Tibial artery (tissue), 4 donors: ENCODE measurements at regions of chr11 and their contacts with region 1.

Region 1: DNA sequence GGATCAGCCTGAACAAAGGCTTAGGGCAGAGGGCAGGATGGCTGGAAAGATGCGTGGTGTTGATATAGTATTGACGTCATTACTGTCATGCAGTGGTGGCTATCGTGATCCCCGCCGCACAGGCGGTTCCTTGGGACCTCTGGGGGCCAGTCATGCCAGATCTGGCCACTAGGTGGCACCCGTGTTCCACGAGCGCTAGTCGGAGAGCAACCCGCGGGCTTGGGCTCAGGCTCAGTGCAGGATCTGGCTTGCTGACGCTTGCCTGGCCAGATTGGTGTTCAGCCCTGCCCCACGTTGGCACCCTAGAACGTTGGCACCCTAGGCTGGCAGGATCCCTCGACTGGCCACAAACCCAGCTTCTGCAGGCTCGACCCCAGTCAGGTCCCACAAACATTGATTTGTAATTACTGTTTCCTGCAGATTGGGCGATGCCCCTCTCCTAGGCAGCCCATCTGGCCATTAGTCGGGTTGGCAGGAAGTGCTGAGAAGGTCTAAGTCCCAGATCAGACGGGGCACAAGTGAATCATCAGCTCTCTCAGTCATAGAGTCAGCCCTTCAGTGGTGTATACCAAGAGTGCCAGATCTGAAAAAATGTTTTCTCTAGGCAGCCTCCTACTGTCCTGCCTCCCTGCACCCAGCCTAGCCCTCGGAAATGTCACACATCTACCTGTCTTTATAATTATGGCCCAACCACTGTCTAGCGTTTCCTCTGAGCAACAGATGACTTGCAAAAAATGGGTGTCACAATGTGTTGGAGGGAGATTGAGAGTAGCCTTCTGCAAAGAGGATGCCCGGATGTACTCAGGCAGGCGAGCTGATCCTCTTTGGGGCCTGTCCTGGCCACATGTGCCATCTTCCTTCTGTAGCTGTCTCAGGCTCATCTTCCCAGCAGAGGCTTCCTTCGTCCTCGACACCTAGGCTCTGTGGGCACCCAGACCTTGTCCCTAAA is 315.3 kb downstream of the TMEM135 start:
- DNase-seq: peak; percentile 77 to 89
- H3K4me3 ChIP-seq: no peak overlapping the region
- H3K27ac ChIP-seq: peak overlapping the region; percentile 16 to 21
- H3K4me1 ChIP-seq: peaks cover 0 to 30% (median 14%) of the 10 kb centered on the region in 4 donors
- H3K27me3 ChIP-seq: no peaks in the 10 kb centered on the region
- CTCF ChIP-seq: peak; percentile 99 to 100

Region 2: DNA sequence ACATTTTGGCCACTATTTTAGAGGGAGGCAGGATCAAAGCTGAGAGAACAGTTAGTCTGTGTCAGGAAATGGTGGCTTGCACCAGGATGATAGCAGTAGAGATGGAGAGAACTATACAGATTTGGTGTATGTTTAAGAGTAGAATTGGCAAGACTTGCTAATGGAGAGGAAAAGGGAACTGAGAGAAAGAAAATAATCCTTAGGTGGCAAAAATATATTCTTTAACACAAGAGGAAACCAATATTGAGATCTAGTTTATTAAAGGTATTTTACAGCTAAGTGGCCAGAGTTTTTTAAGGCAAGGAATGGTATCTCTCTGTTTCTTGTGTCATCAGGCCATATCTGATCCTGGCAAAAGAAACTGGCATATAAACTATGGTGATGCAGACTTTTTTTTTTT is 36.5 kb before region 1 on chr11:
- intact Hi-C with region 1: no loop called
- DNase-seq: no peak
- H3K4me3 ChIP-seq: no peak overlapping the region
- H3K27ac ChIP-seq: no peak overlapping the region
- H3K4me1 ChIP-seq: no peaks in the 10 kb centered on the region
- H3K27me3 ChIP-seq: no peaks in the 10 kb centered on the region
- CTCF ChIP-seq: no peak

Region 3: DNA sequence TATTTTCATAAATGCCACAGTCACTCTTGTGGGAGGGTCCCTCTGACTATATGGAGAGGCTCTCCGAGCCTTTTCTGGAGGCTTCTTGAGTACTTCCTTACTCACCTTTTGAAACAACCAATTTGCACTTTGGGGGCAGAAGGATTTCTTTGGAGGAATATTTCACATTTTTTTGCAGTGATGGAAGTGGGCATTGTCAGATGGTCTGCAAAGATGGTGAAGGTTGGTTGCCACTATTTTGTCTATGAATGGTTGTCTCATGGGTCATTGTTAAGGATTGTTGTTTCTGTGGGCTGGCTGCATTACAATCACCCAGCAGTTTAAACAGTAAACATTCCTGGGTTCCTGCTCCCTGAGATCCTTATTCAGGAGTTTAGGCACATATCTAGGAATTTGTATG is 72.9 kb after region 1 on chr11:
- intact Hi-C with region 1: loop called (anchors 2 kb)
- DNase-seq: no peak
- H3K4me3 ChIP-seq: no peak overlapping the region
- H3K27ac ChIP-seq: no peak overlapping the region
- H3K4me1 ChIP-seq: peaks cover 0 to 3% (median 0%) of the 10 kb centered on the region in 4 donors
- H3K27me3 ChIP-seq: no peaks in the 10 kb centered on the region
- CTCF ChIP-seq: no peak

Region 4: GRCh38 chr11:88543902-88544655 is 1191.0 kb after region 1 on chr11:
- intact Hi-C with region 1: loop called (anchors 5 kb)
- DNase-seq: peak; percentile 79 to 84
- H3K4me3 ChIP-seq: no peak overlapping the region
- H3K27ac ChIP-seq: no peak overlapping the region
- H3K4me1 ChIP-seq: no peaks in the 10 kb centered on the region
- H3K27me3 ChIP-seq: no peaks in the 10 kb centered on the region
- CTCF ChIP-seq: peak; percentile 93 to 94